ENCODE measurements at regions of chr1 and their contacts with region 1.

Region 1: GRCh38 chr1:42462828-42463763 is at the start of gene CCDC30:
- DNase-seq: peak; percentile 99
- H3K4me3 ChIP-seq: peak within 1 kb of the TSS; percentile 57 to 79 (median 67)
- H3K27ac ChIP-seq: peak within 1 kb of the TSS; percentile 24
- H3K4me1 ChIP-seq: peaks cover 7% of the 10 kb centered on the region
- H3K27me3 ChIP-seq: peaks cover under 1 to 3% of the 10 kb centered on the region in 2 experiments
- CTCF ChIP-seq: no peak
- POLR2A ChIP-seq: no peak
- total RNA-seq, gene CCDC30: 1.5 and 2.9 TPM in 2 replicates

Region 2: GRCh38 chr1:42380586-42381279 is 82.4 kb before region 1 on chr1 and contains the start of gene RIMKLA:
- CTCF ChIA-PET with region 1: no interaction called
- POLR2A ChIA-PET with region 1: no interaction called
- dilution Hi-C with region 1: no loop called
- intact Hi-C with region 1: loop called (anchors 2 kb)
- DNase-seq: peak; percentile 20
- H3K4me3 ChIP-seq: peak within 1 kb of the TSS; percentile 16 to 40 (median 36)
- H3K27ac ChIP-seq: no peak within 1 kb of the TSS
- H3K4me1 ChIP-seq: peaks cover 2% of the 10 kb centered on the region
- H3K27me3 ChIP-seq: peaks cover 16 to 36% of the 10 kb centered on the region in 2 experiments
- CTCF ChIP-seq: no peak
- POLR2A ChIP-seq: no peak
- total RNA-seq, gene RIMKLA: not detected in 2 replicates

Region 3: DNA sequence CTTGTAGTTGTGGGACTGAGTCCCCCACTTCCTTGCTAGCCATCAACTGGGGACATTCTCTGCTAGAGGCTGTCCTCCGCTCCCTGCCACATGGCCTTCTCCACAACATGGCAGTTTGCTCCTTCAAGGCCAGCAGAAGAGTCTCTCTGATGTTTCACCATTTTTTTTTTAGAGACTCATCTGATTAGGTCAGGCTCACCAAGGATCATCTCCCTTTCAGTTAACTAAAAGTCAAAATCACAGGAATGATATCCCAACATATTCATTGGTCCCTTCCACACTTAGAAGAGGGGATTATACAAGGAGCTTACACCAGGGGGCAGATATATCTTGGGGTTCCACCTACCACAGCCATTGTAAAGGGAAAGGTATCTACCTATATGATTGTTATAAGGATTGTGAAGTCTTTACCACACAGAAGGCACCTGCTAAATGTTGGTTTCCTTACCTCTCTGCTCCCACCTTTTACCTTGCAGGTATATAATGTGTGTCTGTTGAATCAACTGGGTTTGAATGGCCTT is 59.2 kb before region 1 on chr1:
- CTCF ChIA-PET with region 1: no interaction called
- POLR2A ChIA-PET with region 1: no interaction called
- dilution Hi-C with region 1: no loop called
- intact Hi-C with region 1: loop called (anchors 2 kb)
- DNase-seq: no peak
- H3K4me3 ChIP-seq: no peak overlapping the region
- H3K27ac ChIP-seq: no peak overlapping the region
- H3K4me1 ChIP-seq: no peaks in the 10 kb centered on the region
- H3K27me3 ChIP-seq: peaks cover 4 to 12% of the 10 kb centered on the region in 2 experiments
- CTCF ChIP-seq: peak in 1 of 2 donors; percentile 16
- POLR2A ChIP-seq: no peak

Region 4: DNA sequence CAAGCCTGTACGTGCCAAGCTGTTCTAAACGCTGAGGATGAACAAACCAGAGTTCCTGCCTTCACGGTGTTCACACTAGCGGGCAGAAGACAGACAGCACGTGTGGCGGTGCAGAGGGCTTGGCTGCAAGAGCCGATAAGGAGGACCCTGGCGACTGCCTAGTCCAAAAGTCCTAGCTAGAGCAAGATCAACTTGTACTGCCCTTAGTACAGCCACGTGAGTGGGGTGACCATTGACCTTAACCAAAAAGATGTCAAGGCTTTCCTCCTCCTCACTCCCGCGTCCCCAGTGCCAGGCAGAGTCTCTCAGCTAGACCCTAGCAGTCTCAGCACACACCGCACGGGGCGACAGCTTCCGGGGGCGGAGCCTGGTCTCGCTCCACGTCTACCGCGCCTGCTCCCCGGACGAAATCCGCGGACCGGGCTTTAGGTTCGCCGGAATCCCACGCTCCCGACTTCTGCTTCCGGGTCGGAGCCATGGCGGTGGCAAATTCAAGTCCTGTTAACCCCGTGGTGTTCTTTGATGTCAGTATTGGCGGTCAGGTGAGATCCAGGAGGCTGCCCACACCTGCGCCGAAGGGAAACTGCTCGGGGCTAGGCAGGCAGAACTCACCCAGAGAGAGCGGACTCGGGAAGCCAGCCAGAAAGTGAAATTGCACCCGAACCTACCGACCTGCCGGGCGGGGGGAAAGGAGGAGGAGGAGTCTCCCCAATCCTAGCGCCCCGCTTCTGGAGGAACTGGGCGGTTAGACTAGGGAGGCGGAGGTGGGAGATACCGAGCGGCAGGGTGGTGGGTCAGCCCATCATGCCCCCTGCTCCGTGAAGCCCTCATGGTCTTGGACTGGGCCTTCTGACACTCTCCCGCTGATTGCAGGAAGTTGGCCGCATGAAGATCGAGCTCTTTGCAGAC is 195.1 kb after region 1 on chr1 and contains the start of gene PPIH:
- CTCF ChIA-PET with region 1: no interaction called
- POLR2A ChIA-PET with region 1: no interaction called
- dilution Hi-C with region 1: no loop called
- intact Hi-C with region 1: loop called (anchors 1 kb)
- DNase-seq: peak; percentile 93
- H3K4me3 ChIP-seq: peak within 1 kb of the TSS; percentile 55 to 86 (median 72)
- H3K27ac ChIP-seq: peak within 1 kb of the TSS; percentile 14
- H3K4me1 ChIP-seq: peaks cover 14% of the 10 kb centered on the region
- H3K27me3 ChIP-seq: peaks cover 7 to 8% of the 10 kb centered on the region in 2 experiments
- CTCF ChIP-seq: no peak
- POLR2A ChIP-seq: peak; percentile 94
- total RNA-seq, gene PPIH: 49.3 and 52.1 TPM in 2 replicates